ENCODE measurements at regions of chr12 and their contacts with region 1.

Region 1: DNA sequence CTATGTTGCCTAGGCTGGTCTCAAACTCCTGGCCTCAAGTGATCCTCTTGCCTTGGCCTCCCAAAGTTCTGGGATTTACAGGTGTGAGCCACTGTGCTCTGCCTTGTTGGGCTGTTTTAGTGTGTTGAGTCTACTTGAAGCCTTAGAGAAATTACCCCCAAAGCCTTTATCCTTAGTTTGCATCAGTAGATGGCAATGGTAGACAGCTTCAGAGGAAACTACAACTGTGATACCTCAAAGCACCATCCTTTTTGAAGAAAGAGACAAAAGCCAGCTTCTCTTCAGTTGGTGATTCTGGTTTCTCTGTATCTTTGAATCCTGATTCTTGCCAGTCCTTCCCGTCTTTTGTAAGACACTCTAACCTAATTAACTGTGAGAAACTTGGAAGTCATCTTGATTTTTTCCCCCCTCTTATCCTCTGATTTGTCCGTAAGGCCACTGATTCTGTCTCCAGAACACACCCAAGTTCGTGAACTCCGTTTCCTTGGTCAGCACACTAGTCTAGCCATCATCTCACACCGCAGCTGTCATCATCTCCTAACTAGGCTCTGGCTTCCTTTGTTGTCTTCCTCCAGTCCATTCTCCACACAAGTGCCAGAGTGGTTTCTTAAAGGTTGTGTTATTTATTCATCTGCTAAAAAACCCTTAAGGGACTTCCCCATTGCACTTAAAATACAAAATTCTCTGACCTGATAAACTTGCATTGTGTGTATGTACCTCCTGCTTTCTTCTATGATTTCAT is 20.2 kb downstream of the ATP2A2 start:
- DNase-seq: no peak
- ATAC-seq: peak; percentile 17
- H3K4me3 ChIP-seq: no peak overlapping the region
- H3K4me3 Mint-ChIP-seq: no peak overlapping the region
- H3K27ac ChIP-seq: peak overlapping the region in 1 of 2 experiments; percentile 6
- H3K27ac Mint-ChIP-seq: peak overlapping the region; percentile 82
- H3K4me1 ChIP-seq: peaks cover 10% of the 10 kb centered on the region
- H3K4me1 Mint-ChIP-seq: peaks cover 56% of the 10 kb centered on the region
- H3K27me3 ChIP-seq: no peaks in the 10 kb centered on the region
- H3K27me3 Mint-ChIP-seq: no peaks in the 10 kb centered on the region
- CTCF ChIP-seq: no peak

Region 2: DNA sequence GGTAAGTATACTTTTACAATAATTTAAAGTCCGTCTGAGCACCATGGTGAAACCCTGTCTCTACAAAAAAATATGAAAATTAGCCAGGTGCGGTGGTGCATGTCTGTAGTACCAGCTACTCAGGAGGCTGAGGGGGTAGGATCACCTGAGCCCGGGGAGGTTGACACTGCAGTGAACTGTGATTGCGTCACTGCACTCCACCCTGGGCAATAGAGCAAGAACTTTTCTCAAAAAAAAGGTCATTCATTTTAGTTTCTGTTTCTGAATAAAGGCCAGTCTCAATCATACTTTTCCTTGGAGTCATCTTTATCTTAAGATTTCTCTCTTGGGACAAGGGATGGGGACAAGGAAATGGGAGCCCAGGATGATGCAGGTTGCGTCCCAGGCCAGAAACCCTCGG is 289.1 kb before region 1 on chr12:
- CTCF ChIA-PET with region 1: no interaction called
- POLR2A ChIA-PET with region 1: no interaction called
- intact Hi-C with region 1: no loop called
- DNase-seq: peak in 3 of 9 experiments; percentile 30 to 47 (median 33)
- ATAC-seq: peak; percentile 62
- H3K4me3 ChIP-seq: no peak overlapping the region
- H3K4me3 Mint-ChIP-seq: no peak overlapping the region
- H3K27ac ChIP-seq: no peak overlapping the region
- H3K27ac Mint-ChIP-seq: peak overlapping the region; percentile 76
- H3K4me1 ChIP-seq: peaks cover 12% of the 10 kb centered on the region
- H3K4me1 Mint-ChIP-seq: peaks cover 43% of the 10 kb centered on the region
- H3K27me3 ChIP-seq: no peaks in the 10 kb centered on the region
- H3K27me3 Mint-ChIP-seq: no peaks in the 10 kb centered on the region
- CTCF ChIP-seq: no peak

Region 3: GRCh38 chr12:110203546-110203945 is 97.7 kb before region 1 on chr12:
- CTCF ChIA-PET with region 1: no interaction called
- POLR2A ChIA-PET with region 1: no interaction called
- intact Hi-C with region 1: no loop called
- DNase-seq: no peak
- ATAC-seq: no peak
- H3K4me3 ChIP-seq: no peak overlapping the region
- H3K4me3 Mint-ChIP-seq: no peak overlapping the region
- H3K27ac ChIP-seq: no peak overlapping the region
- H3K27ac Mint-ChIP-seq: no peak overlapping the region
- H3K4me1 ChIP-seq: no peaks in the 10 kb centered on the region
- H3K4me1 Mint-ChIP-seq: peaks cover 5% of the 10 kb centered on the region
- H3K27me3 ChIP-seq: no peaks in the 10 kb centered on the region
- H3K27me3 Mint-ChIP-seq: no peaks in the 10 kb centered on the region
- CTCF ChIP-seq: no peak

Region 4: DNA sequence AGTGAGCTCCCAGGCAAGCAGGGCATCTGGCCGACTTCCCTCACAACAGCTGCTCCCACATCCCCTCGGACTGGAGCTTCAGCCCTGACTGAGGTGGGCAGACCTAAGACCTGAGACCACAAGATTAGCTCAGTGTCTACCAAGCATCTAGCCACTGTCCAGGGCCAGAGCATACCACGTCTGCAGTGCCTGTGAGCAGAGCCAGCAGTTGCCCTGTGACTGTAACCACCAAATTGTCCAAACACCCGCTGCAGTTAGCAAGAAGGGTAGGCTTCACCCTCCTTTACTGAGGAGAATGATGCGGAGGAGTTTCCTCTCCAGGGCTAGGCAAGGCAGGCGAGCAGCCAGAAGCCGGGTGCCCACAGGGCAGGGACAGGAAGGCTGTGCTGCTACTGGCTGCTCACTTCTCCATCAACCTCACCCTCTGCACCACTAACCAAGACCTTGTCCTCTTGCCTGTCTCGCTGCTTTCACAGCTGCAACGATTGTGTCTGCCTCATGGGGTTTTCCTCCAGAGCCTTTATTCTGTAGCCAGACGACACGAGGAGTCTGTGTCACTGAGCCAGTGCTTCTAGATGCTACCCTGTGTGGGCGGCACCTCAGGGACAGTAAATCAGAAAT is 48.4 kb after region 1 on chr12:
- CTCF ChIA-PET with region 1: no interaction called
- POLR2A ChIA-PET with region 1: no interaction called
- intact Hi-C with region 1: loop called in 1 of 2 experiments (anchors 1 kb)
- DNase-seq: peak in 8 of 9 experiments; percentile 7 to 73 (median 48)
- ATAC-seq: peak; percentile 89
- H3K4me3 ChIP-seq: no peak overlapping the region
- H3K4me3 Mint-ChIP-seq: peak overlapping the region; percentile 53
- H3K27ac ChIP-seq: peak overlapping the region in 1 of 2 experiments; percentile 56
- H3K27ac Mint-ChIP-seq: peak overlapping the region; percentile 89
- H3K4me1 ChIP-seq: peaks cover 26% of the 10 kb centered on the region
- H3K4me1 Mint-ChIP-seq: peaks cover 38% of the 10 kb centered on the region
- H3K27me3 ChIP-seq: no peaks in the 10 kb centered on the region
- H3K27me3 Mint-ChIP-seq: no peaks in the 10 kb centered on the region
- CTCF ChIP-seq: no peak

Measured in CD8-positive, alpha-beta T cell (primary cell).